ENCODE measurements at regions of chr17 and their contacts with region 1.

Region 1: DNA sequence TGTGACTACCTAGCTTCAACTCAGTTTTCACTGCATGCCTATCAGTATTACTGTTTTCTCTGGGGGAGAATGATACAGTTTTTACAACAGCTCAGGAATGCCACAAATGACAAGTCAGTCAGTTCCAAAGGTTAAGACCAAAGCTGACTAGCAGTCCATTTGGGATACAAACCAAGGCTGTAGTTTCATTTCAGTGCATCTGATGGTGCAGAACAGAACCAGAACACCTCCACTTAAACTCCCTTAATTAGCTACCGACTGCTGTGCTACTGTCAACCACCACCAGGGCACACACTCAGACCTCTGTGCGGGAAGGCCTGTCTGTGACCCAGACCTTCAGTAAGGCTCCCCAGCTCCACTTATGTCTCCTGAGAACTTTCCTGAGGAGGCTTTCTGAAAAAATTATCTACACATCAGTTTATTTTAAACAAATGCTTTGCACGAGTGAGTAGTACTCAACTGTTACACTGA is 20.4 kb downstream of the NFE2L1 start:
- DNase-seq: peak in 3 of 4 experiments; percentile 30 to 50 (median 34)
- ATAC-seq: peak; percentile 86
- H3K4me3 ChIP-seq: no peak overlapping the region
- H3K27ac ChIP-seq: no peak overlapping the region
- H3K4me1 ChIP-seq: peaks cover 0 to 3% of the 10 kb centered on the region in 2 experiments; a peak in 1 of 5 replicates
- H3K27me3 ChIP-seq: no peaks in the 10 kb centered on the region
- CTCF ChIP-seq: peak in 2 of 3 experiments; percentile 49 to 51; a peak in 3 of 6 replicates
- EP300 ChIP-seq: no peak
- POLR2A ChIP-seq: no peak
- RAD21 ChIP-seq: 0 out of 4 replicates have a peak, but pooled peaks of 1 of the 2 experiments have one; percentile 22

Region 2: GRCh38 chr17:48054238-48055185 is 14.0 kb before region 1 on chr17:
- CTCF ChIA-PET with region 1: no interaction called
- POLR2A ChIA-PET with region 1: interaction called, 16 read pairs
- in situ Hi-C with region 1: no loop called
- intact Hi-C with region 1: no loop called
- DNase-seq: peak; percentile 66 to 84 (median 74)
- ATAC-seq: peak; percentile 87
- H3K4me3 ChIP-seq: no peak overlapping the region; the same call in 1 of the 2 replicates
- H3K27ac ChIP-seq: peak overlapping the region; percentile 67; the same call in 1 of the 3 replicates
- H3K4me1 ChIP-seq: peaks cover 58 to 63% of the 10 kb centered on the region in 2 experiments
- H3K27me3 ChIP-seq: no peaks in the 10 kb centered on the region
- CTCF ChIP-seq: no peak
- EP300 ChIP-seq: no peak
- POLR2A ChIP-seq: no peak
- RAD21 ChIP-seq: no peak

Measured in K562 (cell line).